ENCODE measurements at regions of chr11 and their contacts with region 1.

Region 1: DNA sequence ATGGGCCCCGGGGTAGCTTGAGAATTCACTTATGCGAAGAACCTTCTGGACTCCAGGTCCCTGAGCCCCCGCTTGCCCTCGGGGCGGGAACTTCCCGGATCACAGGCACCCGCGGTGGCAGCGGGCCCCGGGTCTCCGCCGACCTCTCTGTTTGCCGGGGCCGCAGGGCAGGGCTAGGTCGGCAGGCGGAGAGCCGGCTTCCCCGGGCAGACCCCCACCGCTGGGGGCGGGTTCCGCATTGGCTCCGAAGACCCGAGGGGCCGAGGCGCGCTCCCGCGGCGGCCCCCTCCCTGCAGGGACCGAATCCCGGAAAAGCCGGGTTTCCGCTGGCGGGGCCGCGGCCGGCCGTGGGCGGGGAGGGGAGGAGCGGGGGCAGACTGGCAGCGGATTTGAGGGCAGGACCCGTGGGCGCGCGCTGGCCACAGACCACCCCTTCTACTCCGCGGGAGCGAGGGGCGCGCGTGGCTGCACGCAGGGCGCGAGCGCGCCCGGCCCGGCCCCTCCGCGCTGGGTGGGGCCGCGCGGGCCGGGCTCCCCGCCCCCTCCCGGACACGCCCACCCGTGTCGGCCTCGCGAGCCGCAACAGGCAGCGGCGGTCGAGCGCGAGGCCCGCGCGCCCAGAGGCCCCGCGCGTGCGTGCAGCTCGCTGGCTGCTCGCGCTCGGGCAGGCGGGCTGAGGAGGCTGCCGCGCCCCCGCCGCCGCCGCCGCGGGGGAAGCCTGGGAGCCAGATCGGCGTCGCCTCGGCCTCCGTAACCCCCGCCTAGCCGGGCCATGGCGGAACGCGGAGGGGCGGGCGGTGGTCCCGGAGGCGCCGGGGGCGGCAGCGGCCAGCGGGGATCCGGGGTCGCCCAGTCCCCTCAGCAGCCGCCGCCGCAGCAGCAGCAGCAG is at the start of gene PACS1:
- DNase-seq: peak; percentile 90
- ATAC-seq: peak; percentile 74
- H3K4me3 ChIP-seq: peak within 1 kb of the TSS; percentile 66 to 92 (median 76)
- H3K4me3 Mint-ChIP-seq: peak within 1 kb of the TSS; percentile 94
- H3K27ac ChIP-seq: peak within 1 kb of the TSS; percentile 69 to 76
- H3K27ac Mint-ChIP-seq: peak within 1 kb of the TSS; percentile 99
- H3K4me1 ChIP-seq: peaks cover 50 to 51% of the 10 kb centered on the region in 2 donors
- H3K4me1 Mint-ChIP-seq: peaks cover 66% of the 10 kb centered on the region
- H3K27me3 ChIP-seq: no peaks in the 10 kb centered on the region
- H3K27me3 Mint-ChIP-seq: no peaks in the 10 kb centered on the region
- CTCF ChIP-seq: no peak
- total RNA-seq, gene PACS1: 303 and 325 TPM in 2 replicates

Region 2: GRCh38 chr11:66045177-66045639 is 24.8 kb before region 1 on chr11:
- CTCF ChIA-PET with region 1: interaction called, 78 read pairs
- POLR2A ChIA-PET with region 1: no interaction called
- intact Hi-C with region 1: no loop called
- DNase-seq: peak; percentile 88
- ATAC-seq: peak; percentile 96
- H3K4me3 ChIP-seq: no peak overlapping the region
- H3K4me3 Mint-ChIP-seq: no peak overlapping the region
- H3K27ac ChIP-seq: no peak overlapping the region
- H3K27ac Mint-ChIP-seq: peak overlapping the region; percentile 7
- H3K4me1 ChIP-seq: peaks cover 10 to 15% of the 10 kb centered on the region in 2 donors
- H3K4me1 Mint-ChIP-seq: peaks cover 16% of the 10 kb centered on the region
- H3K27me3 ChIP-seq: peaks cover 0 to 35% (median 5%) of the 10 kb centered on the region in 4 experiments
- H3K27me3 Mint-ChIP-seq: peaks cover 12% of the 10 kb centered on the region
- CTCF ChIP-seq: peak; percentile 94

Region 3: DNA sequence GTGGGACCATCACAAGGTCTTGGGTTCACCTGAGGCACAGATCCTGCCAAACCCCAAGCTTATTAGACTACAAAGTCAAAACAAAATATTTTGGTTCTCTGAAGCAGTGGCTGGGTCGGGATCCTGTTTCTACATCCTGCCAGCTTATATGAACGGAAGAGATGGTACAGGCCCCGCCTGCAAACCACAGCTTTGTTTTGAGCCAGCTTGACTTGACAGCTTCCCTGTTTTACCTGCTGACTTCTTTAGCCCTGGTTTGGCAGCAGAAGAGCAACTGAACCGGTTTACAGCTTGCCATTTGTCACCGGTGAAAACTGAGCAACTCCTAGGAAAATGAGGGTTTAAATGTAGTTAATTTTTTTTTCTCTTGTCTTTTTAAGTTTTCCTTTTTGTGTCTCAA is 11.5 kb after region 1 on chr11:
- CTCF ChIA-PET with region 1: interaction called, 98 read pairs
- POLR2A ChIA-PET with region 1: interaction called, 23 read pairs
- intact Hi-C with region 1: loop called (anchors 1 kb)
- DNase-seq: peak; percentile 89
- ATAC-seq: peak; percentile 92
- H3K4me3 ChIP-seq: peak overlapping the region in 4 of 5 experiments; percentile 27 to 60 (median 42)
- H3K4me3 Mint-ChIP-seq: peak overlapping the region; percentile 80
- H3K27ac ChIP-seq: peak overlapping the region; percentile 76 to 93
- H3K27ac Mint-ChIP-seq: peak overlapping the region; percentile 95
- H3K4me1 ChIP-seq: peaks cover 84 to 91% of the 10 kb centered on the region in 2 donors
- H3K4me1 Mint-ChIP-seq: peaks cover 92% of the 10 kb centered on the region
- H3K27me3 ChIP-seq: no peaks in the 10 kb centered on the region
- H3K27me3 Mint-ChIP-seq: no peaks in the 10 kb centered on the region
- CTCF ChIP-seq: no peak

Region 4: DNA sequence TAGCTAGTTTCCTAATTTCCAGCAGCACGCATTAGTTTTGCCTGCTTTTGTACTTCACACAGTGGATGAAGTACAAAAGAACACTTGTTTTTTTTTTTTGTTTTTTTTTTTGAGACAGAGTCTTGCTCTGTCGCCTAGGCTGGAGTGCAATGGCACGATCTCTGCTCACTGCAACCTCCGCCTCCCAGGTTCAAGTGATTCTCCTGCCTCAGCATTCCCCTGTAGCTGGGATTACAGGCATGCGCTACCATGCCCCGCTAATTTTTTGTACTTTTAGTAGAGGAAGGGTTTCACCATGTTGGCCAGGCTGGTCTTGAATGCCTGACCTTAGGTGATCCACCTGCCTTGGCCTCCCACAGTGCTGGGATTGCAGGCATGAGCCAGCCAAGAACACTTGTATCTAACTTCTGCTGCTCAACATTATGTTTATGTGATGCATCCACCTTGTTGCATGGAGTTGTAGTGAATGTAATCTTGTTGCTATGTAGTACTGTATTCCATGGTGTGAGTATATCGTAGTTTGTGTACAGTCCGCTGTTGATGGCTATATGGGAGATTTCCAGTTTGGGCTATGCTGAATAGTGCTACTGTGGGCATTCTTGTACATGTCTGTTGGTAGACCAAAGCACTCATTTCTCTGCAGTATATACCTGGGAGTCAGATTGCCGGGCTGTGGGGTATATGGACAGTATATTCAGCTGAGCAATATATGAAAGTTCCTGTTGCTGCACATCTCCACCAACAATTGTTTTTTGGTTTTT is 17.4 kb after region 1 on chr11:
- CTCF ChIA-PET with region 1: interaction called, 98 read pairs
- POLR2A ChIA-PET with region 1: interaction called, 23 read pairs
- intact Hi-C with region 1: no loop called
- DNase-seq: no peak
- ATAC-seq: no peak
- H3K4me3 ChIP-seq: peak overlapping the region in 3 of 5 experiments; percentile 3 to 33 (median 15)
- H3K4me3 Mint-ChIP-seq: peak overlapping the region; percentile 75
- H3K27ac ChIP-seq: peak overlapping the region in 1 of 2 donors; percentile 60
- H3K27ac Mint-ChIP-seq: peak overlapping the region; percentile 89
- H3K4me1 ChIP-seq: peaks cover 53 to 66% of the 10 kb centered on the region in 2 donors
- H3K4me1 Mint-ChIP-seq: peaks cover 66% of the 10 kb centered on the region
- H3K27me3 ChIP-seq: no peaks in the 10 kb centered on the region
- H3K27me3 Mint-ChIP-seq: no peaks in the 10 kb centered on the region
- CTCF ChIP-seq: no peak

Region 5: GRCh38 chr11:66112601-66113098 is 42.7 kb after region 1 on chr11:
- CTCF ChIA-PET with region 1: interaction called, 27 read pairs
- POLR2A ChIA-PET with region 1: interaction called, 5 read pairs
- intact Hi-C with region 1: loop called (anchors 1 kb)
- DNase-seq: peak; percentile 61
- ATAC-seq: peak; percentile 56
- H3K4me3 ChIP-seq: peak overlapping the region in 1 of 5 experiments; percentile 20
- H3K4me3 Mint-ChIP-seq: peak overlapping the region; percentile 83
- H3K27ac ChIP-seq: peak overlapping the region; percentile 59 to 70
- H3K27ac Mint-ChIP-seq: peak overlapping the region; percentile 93
- H3K4me1 ChIP-seq: peaks cover 94% of the 10 kb centered on the region in 2 donors
- H3K4me1 Mint-ChIP-seq: peaks cover 87% of the 10 kb centered on the region
- H3K27me3 ChIP-seq: no peaks in the 10 kb centered on the region
- H3K27me3 Mint-ChIP-seq: no peaks in the 10 kb centered on the region
- CTCF ChIP-seq: no peak

Region 6: DNA sequence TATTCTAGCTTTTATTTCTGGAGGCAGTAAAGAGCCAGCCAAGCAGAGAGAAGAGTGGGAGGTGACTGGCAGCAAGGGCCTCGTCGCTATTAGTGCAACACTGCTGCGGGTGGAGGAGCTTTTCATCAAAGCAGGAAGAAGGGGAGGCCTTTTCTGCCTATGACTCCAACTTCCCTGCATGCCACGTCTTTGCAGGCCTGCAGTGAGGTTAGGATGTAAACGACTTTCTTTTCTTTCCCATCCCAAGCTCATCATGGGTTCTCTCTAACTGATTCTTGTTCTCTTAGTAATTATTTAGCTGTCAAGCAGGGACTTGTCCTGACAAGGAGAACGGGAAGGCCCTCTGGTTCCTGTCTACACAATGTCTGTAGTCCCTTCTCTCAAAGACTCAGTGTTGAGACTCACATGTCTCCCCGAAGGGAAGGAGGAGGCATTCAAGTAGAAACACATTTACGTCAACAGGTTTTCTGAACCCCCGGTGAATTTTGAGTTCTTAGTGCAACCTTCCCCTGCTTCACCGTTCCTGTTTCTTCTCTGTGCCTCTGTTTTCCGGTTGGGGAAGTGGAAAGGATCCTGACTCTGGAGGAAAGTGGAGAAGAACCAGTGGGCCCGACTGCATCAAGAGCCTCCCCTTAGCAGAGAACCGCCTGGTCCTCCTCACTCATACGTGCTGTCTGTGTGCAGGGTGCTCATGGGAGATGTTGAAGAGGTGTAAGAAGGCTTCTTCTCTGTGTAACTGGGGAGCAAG is 57.0 kb after region 1 on chr11:
- CTCF ChIA-PET with region 1: interaction called, 92 read pairs
- POLR2A ChIA-PET with region 1: interaction called, 12 read pairs
- intact Hi-C with region 1: loop called (anchors 2 kb)
- DNase-seq: peak; percentile 81
- ATAC-seq: peak; percentile 80
- H3K4me3 ChIP-seq: peak overlapping the region in 3 of 5 experiments; percentile 10 to 53 (median 27)
- H3K4me3 Mint-ChIP-seq: peak overlapping the region; percentile 90
- H3K27ac ChIP-seq: peak overlapping the region; percentile 76 to 87
- H3K27ac Mint-ChIP-seq: peak overlapping the region; percentile 98
- H3K4me1 ChIP-seq: peaks cover 57 to 73% of the 10 kb centered on the region in 2 donors
- H3K4me1 Mint-ChIP-seq: peaks cover 81% of the 10 kb centered on the region
- H3K27me3 ChIP-seq: no peaks in the 10 kb centered on the region
- H3K27me3 Mint-ChIP-seq: no peaks in the 10 kb centered on the region
- CTCF ChIP-seq: no peak

Region 7: DNA sequence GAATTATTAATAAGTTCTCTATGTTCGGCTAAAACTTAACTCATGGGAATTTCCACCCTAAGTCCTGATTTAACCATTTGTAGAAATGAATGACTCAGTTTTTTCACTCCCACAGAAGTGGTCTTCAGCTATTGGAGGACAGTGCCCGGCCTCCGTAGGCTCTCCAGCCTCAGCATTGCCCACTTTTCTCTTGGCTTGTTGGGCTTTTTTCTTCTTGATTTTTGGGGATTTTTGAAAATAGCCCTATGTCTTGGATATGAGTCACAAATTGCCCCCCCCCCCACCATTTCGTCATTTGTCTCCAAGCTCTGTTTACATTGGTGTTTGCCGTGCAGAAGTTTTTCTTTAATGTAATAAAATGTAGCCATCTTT is 66.8 kb after region 1 on chr11:
- CTCF ChIA-PET with region 1: interaction called, 92 read pairs
- POLR2A ChIA-PET with region 1: interaction called, 12 read pairs
- intact Hi-C with region 1: loop called (anchors 1 kb)
- DNase-seq: no peak
- ATAC-seq: no peak
- H3K4me3 ChIP-seq: no peak overlapping the region
- H3K4me3 Mint-ChIP-seq: no peak overlapping the region
- H3K27ac ChIP-seq: peak overlapping the region in 1 of 2 donors; percentile 57
- H3K27ac Mint-ChIP-seq: peak overlapping the region; percentile 65
- H3K4me1 ChIP-seq: peaks cover 44 to 50% of the 10 kb centered on the region in 2 donors
- H3K4me1 Mint-ChIP-seq: peaks cover 75% of the 10 kb centered on the region
- H3K27me3 ChIP-seq: no peaks in the 10 kb centered on the region
- H3K27me3 Mint-ChIP-seq: no peaks in the 10 kb centered on the region
- CTCF ChIP-seq: no peak

Region 8: DNA sequence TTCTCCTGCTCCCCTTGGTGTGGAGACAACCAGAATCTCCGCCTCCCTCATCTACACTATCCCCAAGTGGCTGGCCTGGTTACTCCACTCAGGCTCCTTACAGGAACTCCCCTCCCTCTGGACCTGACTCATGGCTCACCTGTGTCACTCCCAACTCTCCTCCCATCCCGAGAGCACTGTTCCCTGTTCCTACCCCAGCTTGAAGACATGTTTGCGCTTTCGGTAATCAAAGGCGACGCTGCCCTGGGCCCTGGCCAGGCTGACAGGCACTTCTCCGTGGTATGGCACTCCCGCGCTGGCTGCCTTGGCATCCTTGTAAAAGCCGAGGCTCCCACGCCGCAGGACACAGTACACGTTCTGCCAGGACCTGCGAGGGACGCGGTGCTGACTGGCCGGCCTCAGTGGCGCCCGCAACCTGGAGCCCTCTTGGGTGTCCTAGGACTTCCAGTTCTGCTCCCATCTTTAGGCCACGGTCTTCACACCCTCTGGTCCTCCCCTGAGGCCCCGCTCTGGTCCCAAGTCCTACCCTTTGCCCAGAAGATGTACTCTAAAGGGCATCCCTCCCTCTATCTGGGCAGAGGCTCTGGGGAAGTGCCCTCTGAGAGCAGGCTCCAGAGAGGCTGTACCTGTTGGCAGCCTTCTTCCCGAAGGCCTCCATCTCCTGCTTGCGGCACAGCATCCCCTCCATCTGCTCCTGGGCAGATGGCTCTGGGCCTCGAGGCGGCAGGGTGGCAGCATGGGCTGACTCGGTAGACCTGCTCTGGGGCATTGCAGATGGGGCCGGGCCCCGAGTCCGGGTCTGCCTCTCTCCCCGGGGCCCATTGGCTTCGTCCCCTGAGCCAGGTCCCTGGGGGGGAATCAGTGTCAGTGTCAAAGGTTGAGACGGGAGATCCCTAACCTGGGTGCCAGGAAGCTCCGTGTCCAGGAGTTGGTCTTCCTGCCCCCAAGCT is 617.1 kb after region 1 on chr11:
- CTCF ChIA-PET with region 1: no interaction called
- POLR2A ChIA-PET with region 1: no interaction called
- intact Hi-C with region 1: no loop called
- DNase-seq: no peak
- ATAC-seq: no peak
- H3K4me3 ChIP-seq: no peak overlapping the region
- H3K4me3 Mint-ChIP-seq: no peak overlapping the region
- H3K27ac ChIP-seq: no peak overlapping the region
- H3K27ac Mint-ChIP-seq: no peak overlapping the region
- H3K4me1 ChIP-seq: no peaks in the 10 kb centered on the region
- H3K4me1 Mint-ChIP-seq: no peaks in the 10 kb centered on the region
- H3K27me3 ChIP-seq: no peaks in the 10 kb centered on the region
- H3K27me3 Mint-ChIP-seq: no peaks in the 10 kb centered on the region
- CTCF ChIP-seq: no peak